Calu3 (cell line): ENCODE measurements at regions of chr4 and their contacts with region 1.

Region 1: GRCh38 chr4:4321951-4322716 is 32.1 kb downstream of the ZBTB49 start:
- DNase-seq: no peak
- H3K4me3 Mint-ChIP-seq: no peak overlapping the region
- H3K27ac Mint-ChIP-seq: no peak overlapping the region
- H3K4me1 Mint-ChIP-seq: no peaks in the 10 kb centered on the region
- H3K27me3 Mint-ChIP-seq: no peaks in the 10 kb centered on the region
- CTCF ChIP-seq: no peak

Region 2: DNA sequence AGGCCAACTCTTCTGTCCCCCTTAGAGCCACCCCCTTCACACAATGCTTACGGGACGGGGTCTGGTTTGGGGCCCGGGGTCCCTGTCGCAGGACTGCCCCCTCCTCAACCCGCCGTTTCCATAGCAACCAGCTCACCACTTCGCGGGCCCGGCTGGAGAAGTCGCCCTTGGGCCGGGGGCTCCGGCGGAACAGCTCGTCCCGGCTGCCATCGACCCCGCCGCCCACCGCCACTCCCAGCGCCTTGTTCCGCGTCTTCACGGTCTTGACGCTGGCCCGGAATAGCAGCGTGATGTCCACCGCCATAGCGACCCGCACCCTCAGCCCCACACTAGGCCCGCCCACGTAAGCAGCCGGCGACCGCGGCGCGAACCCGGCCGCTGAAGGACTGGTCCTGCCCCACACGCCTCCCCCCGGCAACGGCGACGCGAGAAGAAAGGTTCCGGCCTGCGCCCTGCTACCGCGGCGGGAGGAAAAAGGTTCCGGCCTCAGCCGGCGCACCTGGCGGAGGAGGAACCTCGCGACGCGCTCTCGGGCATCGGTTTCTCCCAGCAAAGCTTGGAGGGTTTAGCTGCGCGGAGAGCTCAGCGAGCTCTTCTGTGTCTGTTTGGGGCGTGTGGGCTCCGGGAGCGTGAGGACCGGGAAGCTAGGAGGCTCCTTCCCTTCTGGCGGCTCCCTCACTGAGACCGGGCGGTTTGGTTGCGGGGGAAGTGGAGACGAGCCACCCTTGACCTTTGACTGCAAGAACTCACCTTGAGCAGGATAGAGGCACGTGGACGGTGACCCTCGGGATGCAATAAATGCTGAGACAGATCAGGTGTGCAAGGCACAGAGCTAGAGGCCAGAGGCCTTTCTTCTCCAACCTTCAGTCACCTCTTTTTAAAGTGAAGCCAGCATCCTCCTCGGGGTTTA is 219.8 kb after region 1 on chr4 and contains the start of gene STX18:
- CTCF ChIA-PET with region 1: interaction called, 16 read pairs
- intact Hi-C with region 1: no loop called
- DNase-seq: peak; percentile 87
- H3K4me3 Mint-ChIP-seq: peak within 1 kb of the TSS; percentile 93
- H3K27ac Mint-ChIP-seq: peak within 1 kb of the TSS; percentile 94
- H3K4me1 Mint-ChIP-seq: no peaks in the 10 kb centered on the region
- H3K27me3 Mint-ChIP-seq: no peaks in the 10 kb centered on the region
- CTCF ChIP-seq: no peak
- total RNA-seq, gene STX18: 25.6 and 27.3 TPM in 2 replicates